AG04450 (cell line): ENCODE measurements at regions of chr17 and their contacts with region 1.

Region 1: GRCh38 chr17:38637951-38638350 is 32.2 kb upstream of the SRCIN1 start:
- DNase-seq: no peak
- H3K4me3 ChIP-seq: no peak overlapping the region
- H3K27ac ChIP-seq: no peak overlapping the region
- H3K27me3 ChIP-seq: peaks cover 5% of the 10 kb centered on the region
- CTCF ChIP-seq: no peak

Region 2: GRCh38 chr17:38606646-38607611 is 31.0 kb before region 1 on chr17:
- CTCF ChIA-PET with region 1: interaction called, 11 read pairs
- POLR2A ChIA-PET with region 1: no interaction called
- DNase-seq: no peak
- H3K4me3 ChIP-seq: no peak overlapping the region
- H3K27ac ChIP-seq: no peak overlapping the region
- H3K27me3 ChIP-seq: peaks cover 79% of the 10 kb centered on the region
- CTCF ChIP-seq: no peak